ENCODE measurements at regions of chr5 and their contacts with region 1.

Region 1: DNA sequence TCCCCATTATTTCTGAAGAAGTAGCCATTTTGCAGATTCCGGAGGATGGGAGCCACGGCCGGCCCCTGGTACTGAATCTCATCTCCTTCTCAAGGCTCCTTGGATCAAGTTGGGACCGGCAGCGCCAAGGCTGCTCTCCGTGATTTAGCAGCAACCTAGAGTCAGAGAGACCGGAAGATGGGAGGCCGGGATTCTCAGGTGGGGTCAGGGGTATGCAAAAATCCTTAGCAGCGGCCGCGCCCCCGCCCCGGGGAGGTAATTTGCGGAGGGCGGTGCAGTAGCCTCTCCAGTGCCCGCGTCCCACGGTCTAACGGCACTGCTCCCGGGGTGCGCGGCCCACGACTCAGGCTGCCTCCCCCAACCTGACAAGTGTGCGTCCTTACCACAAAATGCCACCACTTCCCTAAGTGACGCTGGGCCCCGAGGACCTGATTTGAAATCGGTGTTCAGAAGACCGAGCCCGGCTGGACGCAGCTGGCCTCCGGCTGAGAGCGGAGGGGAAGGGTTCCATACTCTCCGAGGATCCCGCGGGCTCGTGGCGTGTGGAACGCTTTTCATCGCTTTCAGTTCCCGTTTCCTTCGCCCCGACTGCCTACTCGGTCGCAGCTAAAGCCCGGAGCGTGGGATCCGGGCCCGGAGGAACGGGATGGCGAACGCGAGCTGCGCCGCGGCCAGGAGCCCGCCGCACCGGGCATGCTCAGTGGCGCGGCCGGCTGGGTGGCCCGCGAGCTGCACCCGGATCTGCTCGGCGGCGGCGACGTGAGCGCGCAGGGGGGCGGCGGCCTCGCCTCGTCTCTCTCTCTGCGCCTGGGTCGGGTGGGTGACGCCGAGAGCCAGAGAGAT is at the start of gene SCAMP1:
- DNase-seq: peak; percentile 94
- H3K4me3 Mint-ChIP-seq: peak within 1 kb of the TSS; percentile 94
- H3K27ac Mint-ChIP-seq: peak within 1 kb of the TSS; percentile 96
- H3K4me1 Mint-ChIP-seq: peaks cover 38% of the 10 kb centered on the region
- H3K27me3 Mint-ChIP-seq: no peaks in the 10 kb centered on the region
- total RNA-seq, gene SCAMP1: 13.6 to 18.3 TPM

Region 2: DNA sequence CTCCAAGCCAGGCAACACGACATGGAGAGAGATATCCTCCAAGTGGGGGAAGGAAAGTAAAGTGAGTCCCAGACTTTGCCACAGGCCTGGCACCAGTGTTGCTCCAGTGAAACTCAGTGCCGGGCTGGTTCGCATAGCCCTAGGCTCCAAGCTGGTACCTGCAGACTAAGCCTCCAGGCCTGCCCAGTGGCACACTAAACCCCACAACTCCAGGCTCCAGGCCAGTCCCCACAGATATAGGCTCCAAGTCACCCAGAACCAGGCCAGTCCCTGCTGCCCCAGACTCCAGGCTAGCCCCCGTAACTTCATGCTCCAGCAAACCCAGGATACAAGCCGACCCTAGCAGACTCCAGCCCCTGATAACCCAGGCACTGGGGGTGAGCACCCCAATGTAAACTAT is 42.5 kb before region 1 on chr5:
- CTCF ChIA-PET with region 1: no interaction called
- POLR2A ChIA-PET with region 1: no interaction called
- intact Hi-C with region 1: loop called (anchors 1 kb)
- DNase-seq: no peak
- H3K4me3 Mint-ChIP-seq: no peak overlapping the region
- H3K27ac Mint-ChIP-seq: no peak overlapping the region
- H3K4me1 Mint-ChIP-seq: no peaks in the 10 kb centered on the region
- H3K27me3 Mint-ChIP-seq: peaks cover 3% of the 10 kb centered on the region

Region 3: GRCh38 chr5:78405829-78406750 is 46.0 kb after region 1 on chr5:
- CTCF ChIA-PET with region 1: interaction called, 3 read pairs
- POLR2A ChIA-PET with region 1: no interaction called
- intact Hi-C with region 1: loop called (anchors 1 kb)
- DNase-seq: no peak
- H3K4me3 Mint-ChIP-seq: no peak overlapping the region
- H3K27ac Mint-ChIP-seq: peak overlapping the region; percentile 71
- H3K4me1 Mint-ChIP-seq: peaks cover 38% of the 10 kb centered on the region
- H3K27me3 Mint-ChIP-seq: no peaks in the 10 kb centered on the region